ENCODE measurements at regions of chr1 and their contacts with region 1.

Region 1: GRCh38 chr1:93552741-93553455 is 105.0 kb downstream of the FNBP1L start:
- DNase-seq: no peak
- ATAC-seq: peak; percentile 73

Region 2: DNA sequence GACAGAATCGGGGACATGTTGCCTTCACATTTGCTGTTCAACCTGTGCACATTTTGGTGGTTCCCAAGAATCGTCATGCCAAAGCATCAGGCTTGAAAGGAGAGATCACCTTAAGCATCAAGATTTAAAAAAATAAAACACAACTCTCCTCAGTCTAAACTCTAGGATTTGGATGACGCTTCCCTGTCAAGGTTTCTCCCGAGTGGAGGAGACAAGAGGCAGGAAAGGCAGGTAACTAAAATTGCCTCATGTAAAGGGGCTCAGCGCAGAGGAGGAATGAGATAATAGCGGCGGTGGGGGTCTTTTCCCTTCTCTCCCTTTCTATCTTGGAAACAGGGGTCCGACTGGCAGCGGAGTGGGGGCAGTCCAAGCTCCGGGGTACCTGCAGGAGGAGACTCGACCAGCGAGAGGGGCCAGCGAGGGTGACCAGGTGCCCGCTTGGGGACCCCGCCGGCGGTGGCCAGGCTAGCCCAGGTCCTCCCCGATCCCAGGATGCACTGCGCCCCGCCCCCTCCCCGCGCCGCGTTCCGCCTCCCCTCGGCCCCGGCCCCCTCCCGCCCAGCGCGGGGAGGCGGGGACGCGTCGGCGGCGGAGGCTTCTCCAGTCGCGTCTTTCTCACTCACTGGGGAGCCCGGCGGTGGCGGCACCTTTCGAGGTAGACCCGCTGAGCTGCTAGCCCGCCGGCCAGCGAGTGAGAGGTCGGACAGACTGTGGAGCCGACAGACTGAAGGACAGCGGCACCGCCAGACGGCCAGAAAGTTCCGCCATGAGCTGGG is 105.2 kb before region 1 on chr1 and contains the start of gene FNBP1L:
- intact Hi-C with region 1: loop called (anchors 5 kb)
- DNase-seq: peak; percentile 87
- ATAC-seq: peak; percentile 97
- total RNA-seq, gene FNBP1L: 24.8 TPM

Region 3: DNA sequence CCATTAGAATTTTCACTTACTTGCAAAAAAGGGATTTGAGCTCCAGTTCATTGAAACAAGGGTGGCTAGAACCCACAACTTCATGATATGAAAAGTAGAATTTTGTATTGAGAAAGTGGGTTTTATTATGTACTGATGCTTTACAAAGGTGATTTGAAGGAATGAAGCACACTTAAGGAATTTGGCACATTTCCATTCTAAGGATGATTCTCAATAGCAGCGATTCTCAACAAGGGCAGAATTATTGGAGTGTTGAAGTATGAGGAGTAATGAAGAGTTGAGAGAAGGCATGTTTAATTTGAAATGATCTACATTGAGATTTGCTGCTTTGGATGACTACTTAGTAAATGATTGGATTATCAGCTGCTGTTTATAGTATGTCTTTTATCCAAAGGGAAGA is 50.3 kb before region 1 on chr1:
- intact Hi-C with region 1: loop called (anchors 5 kb)
- DNase-seq: no peak
- ATAC-seq: no peak

Region 4: GRCh38 chr1:93607814-93608186 is 54.9 kb after region 1 on chr1:
- intact Hi-C with region 1: loop called (anchors 5 kb)
- DNase-seq: no peak
- ATAC-seq: peak; percentile 5

Region 5: DNA sequence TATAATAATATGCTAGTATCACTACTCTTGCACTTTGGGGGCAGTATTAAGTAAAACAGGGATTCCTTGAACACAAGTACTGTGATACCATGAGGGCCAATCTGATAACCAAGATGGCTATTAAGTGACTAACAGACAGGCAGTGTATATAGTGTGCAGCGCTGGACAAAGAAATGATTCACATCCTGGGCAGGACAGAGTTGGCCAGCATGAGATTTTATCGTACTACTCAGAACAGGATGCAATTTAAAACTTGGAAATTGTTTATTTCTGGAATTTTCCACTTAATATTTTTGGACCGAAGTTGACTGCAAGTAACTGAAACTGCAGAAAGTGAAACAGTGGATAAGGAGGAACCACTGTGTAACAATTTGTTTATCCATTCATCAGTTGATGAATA is 251.5 kb after region 1 on chr1:
- intact Hi-C with region 1: no loop called
- DNase-seq: no peak
- ATAC-seq: peak; percentile 93

Measured in Right ventricle myocardium inferior (tissue), 1 donor.